Activated naive CD4-positive, alpha-beta T cell treated with anti-CD3 and anti-CD28 coated beads for 36 hours (primary cell): ENCODE measurements at regions of chr13 and their contacts with region 1.

Region 1: DNA sequence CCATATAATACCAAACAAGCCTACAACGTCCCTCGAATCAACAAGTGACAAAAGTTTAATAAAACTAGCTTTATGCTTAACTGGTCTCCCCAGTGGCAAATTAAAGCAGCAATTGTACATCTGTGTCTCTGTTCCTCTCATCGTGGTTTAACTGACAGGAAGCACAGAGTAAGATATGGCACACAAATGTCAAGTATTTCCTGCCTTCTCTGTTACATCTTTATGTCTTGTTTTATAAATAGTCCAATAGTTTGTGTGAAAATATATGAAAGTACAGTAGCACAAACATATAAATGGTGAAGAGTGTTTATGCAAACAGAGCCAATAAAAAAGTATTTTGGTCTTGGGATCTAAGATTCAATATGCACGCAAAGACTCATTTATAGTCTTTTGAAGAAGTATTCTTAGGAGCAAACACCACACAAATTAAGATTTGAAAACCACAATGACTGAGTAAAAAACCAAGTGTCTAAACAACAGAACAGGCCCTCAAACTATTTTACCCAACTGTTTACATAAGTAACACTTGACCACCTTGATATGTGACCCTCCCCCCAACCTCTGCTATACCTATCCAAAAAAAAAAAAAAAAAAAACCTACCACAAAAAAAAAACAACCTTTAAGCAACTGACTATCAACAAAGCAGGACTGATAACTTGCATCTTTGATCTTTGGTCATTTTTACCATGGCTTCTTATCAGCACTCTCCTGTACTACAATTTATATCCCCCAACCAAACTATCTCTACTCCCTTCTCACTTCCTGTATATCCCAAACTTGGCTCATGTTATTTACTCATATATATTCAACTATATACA is 14.0 kb downstream of the ELF1 start:
- DNase-seq: no peak
- H3K4me3 Mint-ChIP-seq: peak overlapping the region; percentile 55
- H3K27ac Mint-ChIP-seq: peak overlapping the region; percentile 93
- H3K4me1 Mint-ChIP-seq: peaks cover 70% of the 10 kb centered on the region
- H3K27me3 Mint-ChIP-seq: no peaks in the 10 kb centered on the region

Region 2: DNA sequence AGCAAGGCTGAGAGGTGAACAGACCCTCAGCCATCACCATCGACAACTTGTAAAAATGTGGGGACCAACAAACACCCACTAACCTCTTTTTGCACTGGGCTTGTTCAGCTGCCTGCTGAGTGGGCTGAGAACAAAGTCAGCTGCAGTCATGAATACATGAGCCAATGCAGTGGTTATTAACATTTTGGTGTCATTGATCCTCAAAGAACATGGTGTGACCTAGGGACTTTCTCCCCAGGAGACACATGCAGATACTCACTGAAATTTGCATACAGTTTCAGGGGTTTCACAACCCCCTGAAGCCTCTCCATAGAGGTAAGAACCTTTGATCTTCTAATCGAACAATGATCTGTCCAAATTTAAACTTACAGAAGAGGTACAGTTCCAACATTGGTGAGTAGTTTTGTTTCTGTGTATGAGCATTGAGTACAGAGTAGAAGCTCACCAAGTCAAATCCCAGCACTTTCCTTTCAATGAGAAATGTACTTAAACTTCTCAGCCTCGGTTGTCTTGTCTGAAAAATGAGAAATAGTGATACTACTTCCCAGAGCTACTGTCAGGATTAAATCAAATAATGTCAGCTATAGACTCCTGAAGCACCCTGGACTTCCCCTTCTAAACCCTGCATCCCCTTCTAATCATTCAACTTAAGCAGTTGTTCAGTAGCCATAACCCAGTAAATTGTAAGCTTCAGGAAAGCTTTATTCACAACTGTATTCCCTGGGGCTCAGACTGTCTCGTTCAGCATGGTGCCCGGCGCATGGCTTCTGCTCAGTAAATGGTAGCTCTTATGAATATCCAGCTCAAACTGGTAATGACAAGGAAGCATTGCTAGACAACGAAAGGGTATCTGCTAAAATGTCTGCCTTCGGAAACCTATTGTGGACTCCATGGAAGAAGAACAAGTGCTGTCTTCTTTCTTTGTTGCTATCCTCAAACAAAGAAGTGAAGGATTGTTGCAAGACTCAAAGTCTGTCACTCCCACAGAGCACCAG is 487.3 kb before region 1 on chr13:
- CTCF ChIA-PET with region 1: no interaction called
- intact Hi-C with region 1: loop called (anchors 5 kb)
- DNase-seq: peak; percentile 57
- H3K4me3 Mint-ChIP-seq: peak overlapping the region; percentile 23
- H3K27ac Mint-ChIP-seq: peak overlapping the region; percentile 87
- H3K4me1 Mint-ChIP-seq: peaks cover 78% of the 10 kb centered on the region
- H3K27me3 Mint-ChIP-seq: no peaks in the 10 kb centered on the region

Region 3: DNA sequence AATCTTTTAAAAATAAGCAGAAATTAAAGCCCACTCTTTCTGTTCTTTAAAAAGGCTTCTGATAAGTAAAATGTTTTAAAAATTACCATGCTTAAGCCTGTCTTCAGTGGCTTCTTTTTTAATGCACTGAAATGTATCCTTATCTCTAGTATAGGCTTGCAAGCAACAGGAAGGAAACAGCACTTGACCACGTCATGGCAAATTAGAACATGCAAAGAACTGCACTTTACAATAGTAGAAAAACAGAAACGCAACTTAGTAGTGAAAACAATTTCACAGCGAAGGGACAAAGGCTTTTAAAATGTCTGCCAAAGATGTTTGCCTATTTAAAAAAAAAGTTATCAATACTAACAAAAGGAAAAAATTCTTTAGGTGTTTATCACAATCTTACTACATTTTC is 22.3 kb before region 1 on chr13:
- CTCF ChIA-PET with region 1: interaction called, 8 read pairs
- intact Hi-C with region 1: loop called (anchors 1 kb)
- DNase-seq: peak; percentile 60
- H3K4me3 Mint-ChIP-seq: peak overlapping the region; percentile 90
- H3K27ac Mint-ChIP-seq: peak overlapping the region; percentile 100
- H3K4me1 Mint-ChIP-seq: peaks cover 55% of the 10 kb centered on the region
- H3K27me3 Mint-ChIP-seq: no peaks in the 10 kb centered on the region

Region 4: DNA sequence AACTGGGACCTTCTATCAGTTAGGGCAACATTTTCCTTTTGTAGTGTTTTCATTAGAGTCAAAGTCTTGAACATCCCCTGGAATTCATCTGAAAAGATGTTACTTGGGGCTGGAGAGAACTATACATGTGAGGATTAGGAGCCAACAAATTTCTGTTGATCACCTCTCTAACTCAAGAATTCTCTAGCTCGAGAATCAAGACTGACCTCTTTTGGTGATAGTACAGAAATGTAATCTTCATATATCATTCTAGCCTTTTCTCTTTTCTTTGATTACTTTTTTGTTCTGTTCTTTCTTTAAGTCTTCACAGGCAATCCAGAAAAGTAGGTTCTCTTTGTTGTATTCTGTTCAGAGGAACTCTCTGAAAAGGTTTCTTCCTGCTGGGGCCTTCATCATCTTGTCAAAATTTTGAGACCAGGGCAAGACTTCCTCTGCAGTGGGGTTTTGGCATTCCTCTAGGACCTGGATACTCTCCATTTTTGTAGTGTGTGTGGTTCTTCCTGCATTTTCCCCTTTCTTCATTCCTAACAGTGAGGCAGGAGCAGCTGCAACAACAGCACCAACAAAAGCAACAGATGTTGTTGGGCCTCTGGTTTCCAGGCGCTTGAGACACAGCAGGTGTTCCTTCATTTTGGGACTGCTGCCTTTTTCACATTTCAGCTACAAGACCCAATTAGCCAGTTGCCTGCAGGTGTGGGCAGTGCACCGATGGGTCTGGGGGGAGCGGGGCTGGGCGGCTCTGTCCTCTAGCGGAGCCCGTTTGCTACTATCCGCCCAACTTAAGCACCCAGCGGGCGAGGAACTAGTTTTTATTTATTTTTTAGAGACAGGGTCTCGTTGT is 12.2 kb before region 1 on chr13:
- CTCF ChIA-PET with region 1: interaction called, 4 read pairs
- intact Hi-C with region 1: loop called (anchors 1 kb)
- DNase-seq: no peak
- H3K4me3 Mint-ChIP-seq: no peak overlapping the region
- H3K27ac Mint-ChIP-seq: peak overlapping the region; percentile 69
- H3K4me1 Mint-ChIP-seq: peaks cover 90% of the 10 kb centered on the region
- H3K27me3 Mint-ChIP-seq: no peaks in the 10 kb centered on the region

Region 5: DNA sequence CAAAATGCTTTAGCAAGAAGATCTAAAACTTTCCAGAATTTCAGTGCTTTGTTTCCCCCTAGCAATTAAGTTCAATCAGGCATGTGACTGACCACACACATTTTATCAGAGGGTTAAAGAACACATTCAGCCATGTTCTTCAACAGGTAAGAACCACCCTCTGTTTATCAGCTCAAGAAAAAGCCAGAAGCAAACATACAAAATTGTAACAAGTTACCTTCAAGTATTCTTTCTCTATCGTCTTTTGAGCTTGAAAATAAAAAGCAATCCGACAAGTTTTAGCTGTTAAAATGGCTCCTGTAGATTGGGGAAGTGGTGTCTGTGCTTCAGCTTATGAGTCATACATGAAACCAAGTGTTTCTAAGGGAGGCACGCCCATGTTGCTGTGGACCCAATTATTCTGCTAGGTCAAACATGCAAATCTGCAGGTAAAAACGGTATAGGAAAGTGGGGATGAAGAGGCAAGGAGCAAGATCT is 14.0 kb after region 1 on chr13 and contains the start of gene ELF1:
- CTCF ChIA-PET with region 1: interaction called, 4 read pairs
- intact Hi-C with region 1: loop called (anchors 1 kb)
- DNase-seq: peak; percentile 67
- H3K4me3 Mint-ChIP-seq: peak within 1 kb of the TSS; percentile 89
- H3K27ac Mint-ChIP-seq: peak within 1 kb of the TSS; percentile 99
- H3K4me1 Mint-ChIP-seq: peaks cover 32% of the 10 kb centered on the region
- H3K27me3 Mint-ChIP-seq: no peaks in the 10 kb centered on the region
- total RNA-seq, gene ELF1: 61.7 to 62.3 TPM

Region 6: DNA sequence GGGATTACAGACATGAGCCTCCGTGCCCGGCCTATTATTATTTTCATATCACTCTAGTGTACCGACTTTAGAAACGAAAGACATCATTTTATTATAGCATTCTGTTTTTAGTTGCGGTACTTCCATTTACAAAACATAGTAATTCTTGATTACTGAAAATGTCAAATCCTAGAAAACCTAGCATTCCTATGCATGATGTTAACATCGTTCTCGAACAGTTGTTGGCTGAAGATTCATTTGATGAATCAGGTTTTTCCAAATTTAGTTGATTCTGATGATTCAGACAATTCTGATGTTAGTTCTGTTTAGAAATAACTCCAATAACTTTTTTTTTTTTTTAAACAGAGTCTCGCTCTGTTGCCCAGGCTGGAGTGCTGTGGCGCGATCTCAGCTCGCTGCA is 269.8 kb after region 1 on chr13:
- CTCF ChIA-PET with region 1: no interaction called
- intact Hi-C with region 1: no loop called
- DNase-seq: no peak
- H3K4me3 Mint-ChIP-seq: no peak overlapping the region
- H3K27ac Mint-ChIP-seq: no peak overlapping the region
- H3K4me1 Mint-ChIP-seq: peaks cover 24% of the 10 kb centered on the region
- H3K27me3 Mint-ChIP-seq: no peaks in the 10 kb centered on the region